Calu3 (cell line): ENCODE measurements at regions of chrX and their contacts with region 1.

Region 1: DNA sequence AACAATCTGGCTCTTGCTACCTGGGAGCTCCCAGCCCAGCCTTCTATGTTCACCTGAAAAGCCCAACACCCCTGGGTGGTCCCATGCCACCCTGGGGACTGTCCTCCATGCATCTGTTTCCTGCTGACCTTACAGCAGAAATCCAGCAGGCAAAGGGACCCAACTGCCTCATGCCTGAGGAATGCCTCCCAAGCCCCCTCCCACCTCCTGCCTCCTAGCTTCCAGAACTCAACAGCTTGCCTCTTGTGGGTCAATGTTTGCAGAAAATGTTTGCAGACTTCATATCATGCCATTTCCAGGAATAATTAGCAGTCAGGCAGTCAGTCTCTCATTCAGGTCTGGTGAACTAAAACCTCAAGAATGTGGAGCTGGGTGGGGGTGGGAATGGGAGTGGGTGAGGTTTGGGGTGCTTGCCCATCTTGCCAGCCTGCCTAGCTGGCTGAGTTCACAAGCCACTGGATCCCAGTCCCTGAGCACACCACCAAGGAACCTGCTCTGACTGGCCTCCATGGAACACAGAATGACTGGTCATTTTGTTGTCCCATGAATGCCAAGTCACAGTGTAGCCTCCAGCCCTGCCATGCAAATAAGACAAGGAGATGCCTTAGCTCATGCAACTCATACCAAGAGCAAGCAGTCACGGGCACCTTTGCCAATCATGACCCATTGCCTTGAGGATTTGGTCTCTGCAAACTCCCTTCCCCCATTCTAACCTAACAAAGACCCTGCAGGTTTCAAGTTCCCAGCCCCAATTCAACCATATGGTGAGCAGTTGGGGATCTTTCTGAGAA is 12.1 kb upstream of the PLAC1 start:
- DNase-seq: peak; percentile 61
- H3K4me3 Mint-ChIP-seq: no peak overlapping the region
- H3K27ac Mint-ChIP-seq: no peak overlapping the region
- H3K4me1 Mint-ChIP-seq: peaks cover 9% of the 10 kb centered on the region
- H3K27me3 Mint-ChIP-seq: no peaks in the 10 kb centered on the region
- CTCF ChIP-seq: no peak

Region 2: GRCh38 chrX:134718105-134718965 is 48.0 kb after region 1 on chrX:
- CTCF ChIA-PET with region 1: no interaction called
- intact Hi-C with region 1: loop called (anchors 5 kb)
- DNase-seq: peak; percentile 34
- H3K4me3 Mint-ChIP-seq: no peak overlapping the region
- H3K27ac Mint-ChIP-seq: no peak overlapping the region
- H3K4me1 Mint-ChIP-seq: peaks cover 10% of the 10 kb centered on the region
- H3K27me3 Mint-ChIP-seq: peaks cover 3% of the 10 kb centered on the region
- CTCF ChIP-seq: no peak